ENCODE measurements at regions of chr11 and their contacts with region 1.

Region 1: GRCh38 chr11:45147017-45147728 is 734 bp downstream of the PRDM11 start:
- DNase-seq: peak; percentile 99
- H3K4me3 ChIP-seq: peak overlapping the region; percentile 72 to 79 (median 76)
- H3K27ac ChIP-seq: peak overlapping the region; percentile 95 to 99 (median 99)
- H3K4me1 ChIP-seq: peaks cover 14 to 49% (median 30%) of the 10 kb centered on the region in 4 donors
- H3K27me3 ChIP-seq: no peaks in the 10 kb centered on the region
- CTCF ChIP-seq: no peak
- EP300 ChIP-seq: no peak
- POLR2A ChIP-seq: peak; percentile 61

Region 2: GRCh38 chr11:45017329-45017728 is 129.8 kb before region 1 on chr11:
- intact Hi-C with region 1: no loop called
- DNase-seq: peak; percentile 42
- H3K4me3 ChIP-seq: no peak overlapping the region
- H3K27ac ChIP-seq: no peak overlapping the region
- H3K4me1 ChIP-seq: peaks cover 14 to 24% (median 21%) of the 10 kb centered on the region in 4 donors
- H3K27me3 ChIP-seq: no peaks in the 10 kb centered on the region
- CTCF ChIP-seq: no peak
- EP300 ChIP-seq: no peak
- POLR2A ChIP-seq: no peak

Region 3: DNA sequence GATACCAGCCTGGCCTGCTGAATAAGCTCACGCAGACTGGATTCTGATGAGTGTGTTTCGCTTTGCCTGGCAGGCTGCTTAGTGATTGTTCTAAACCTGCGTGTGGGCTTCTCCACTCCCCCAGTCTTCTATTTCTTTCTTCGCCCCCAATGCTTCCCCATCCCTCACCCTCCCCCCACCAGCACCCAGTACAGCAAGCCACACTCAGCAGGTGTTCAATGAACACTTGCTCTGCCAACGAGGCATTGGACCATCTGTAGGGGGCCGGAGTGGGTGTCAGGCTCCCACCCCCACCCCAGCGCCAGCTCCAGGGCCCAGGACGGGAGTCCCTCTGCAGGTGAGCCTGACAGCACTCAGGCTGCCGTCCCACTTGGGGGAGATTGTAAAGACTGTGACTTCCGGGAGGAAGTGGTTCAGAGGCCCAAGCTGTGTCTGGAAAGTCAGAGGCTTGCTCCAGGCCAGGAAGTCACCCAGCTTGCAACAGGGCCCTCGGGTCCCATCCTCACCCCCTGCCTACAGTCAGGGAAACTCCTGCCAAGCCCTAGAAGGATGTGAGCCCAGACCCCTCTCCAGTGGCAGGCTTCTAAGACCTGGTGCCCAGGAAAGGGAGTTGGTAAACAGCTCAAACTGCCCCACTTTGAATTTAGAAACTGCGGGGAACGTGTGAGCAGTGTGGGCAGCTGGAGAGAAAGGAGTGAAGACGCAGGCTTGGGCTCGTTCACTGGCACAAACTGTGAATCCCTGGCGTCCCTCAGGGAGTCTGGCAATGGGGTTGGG is 67.0 kb before region 1 on chr11:
- intact Hi-C with region 1: no loop called
- DNase-seq: no peak
- H3K4me3 ChIP-seq: no peak overlapping the region
- H3K27ac ChIP-seq: peak overlapping the region in 2 of 4 donors; percentile 8 to 40
- H3K4me1 ChIP-seq: peaks cover 9 to 31% (median 25%) of the 10 kb centered on the region in 4 donors
- H3K27me3 ChIP-seq: peaks cover 0 to 5% (median 0%) of the 10 kb centered on the region in 4 donors
- CTCF ChIP-seq: no peak
- EP300 ChIP-seq: no peak
- POLR2A ChIP-seq: no peak

Region 4: GRCh38 chr11:45180179-45180842 is 33.1 kb after region 1 on chr11:
- intact Hi-C with region 1: loop called (anchors 2 kb)
- DNase-seq: no peak
- H3K4me3 ChIP-seq: peak overlapping the region; percentile 64 to 77 (median 73)
- H3K27ac ChIP-seq: peak overlapping the region; percentile 84 to 90 (median 89)
- H3K4me1 ChIP-seq: peaks cover 36 to 63% (median 46%) of the 10 kb centered on the region in 4 donors
- H3K27me3 ChIP-seq: no peaks in the 10 kb centered on the region
- CTCF ChIP-seq: peak; percentile 61 to 67 (median 62)
- EP300 ChIP-seq: no peak
- POLR2A ChIP-seq: no peak

Region 5: DNA sequence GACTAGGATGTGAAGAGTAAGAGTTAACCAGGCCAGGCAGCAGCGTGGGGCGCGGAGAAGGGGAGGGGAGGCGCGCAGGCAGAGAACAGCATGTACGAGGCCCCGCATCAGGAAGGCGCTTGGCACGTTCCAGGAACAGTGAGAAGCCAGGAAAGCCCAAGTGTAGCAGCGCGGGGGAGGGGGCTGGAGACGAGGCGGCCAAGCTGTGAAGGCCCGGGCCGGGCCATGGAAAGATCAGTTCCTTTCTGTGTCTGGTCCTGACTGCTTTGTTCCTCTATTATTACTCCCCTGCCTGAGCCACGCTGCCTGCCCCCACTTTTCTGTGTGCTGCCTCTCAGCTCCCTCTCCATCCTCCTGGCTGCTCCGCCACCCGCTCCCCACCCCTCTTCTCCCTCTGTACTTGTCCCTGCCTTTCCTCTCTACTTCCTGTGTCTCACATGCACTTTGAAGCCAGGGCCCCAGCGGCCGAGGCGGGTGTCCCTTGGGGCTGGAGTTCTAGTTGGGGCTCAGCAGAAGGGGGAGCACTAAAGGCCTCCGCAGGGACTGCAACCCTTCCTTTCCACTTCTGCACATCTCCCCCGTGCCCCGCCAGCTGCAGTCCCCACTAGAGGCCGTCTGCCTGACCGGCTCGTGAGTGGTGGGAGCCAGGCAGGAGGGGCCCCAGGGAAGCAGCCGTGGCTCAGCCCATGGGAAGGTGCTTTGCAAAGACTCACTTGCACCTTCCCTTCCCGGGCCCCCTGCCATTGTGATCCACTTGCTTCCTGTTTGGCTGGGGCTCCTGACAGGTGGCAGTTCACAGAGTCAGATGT is 62.9 kb after region 1 on chr11:
- intact Hi-C with region 1: loop called (anchors 5 kb)
- DNase-seq: peak; percentile 96
- H3K4me3 ChIP-seq: peak overlapping the region; percentile 22 to 43 (median 31)
- H3K27ac ChIP-seq: peak overlapping the region; percentile 83 to 95 (median 89)
- H3K4me1 ChIP-seq: peaks cover 37 to 66% (median 48%) of the 10 kb centered on the region in 4 donors
- H3K27me3 ChIP-seq: no peaks in the 10 kb centered on the region
- CTCF ChIP-seq: peak in 1 of 3 experiments; percentile 13
- EP300 ChIP-seq: peak; percentile 91
- POLR2A ChIP-seq: no peak

Measured in esophagus muscularis mucosa (tissue), 4 donors.